SK-N-SH (cell line): ENCODE measurements at regions of chr4 and their contacts with region 1.

Region 1: DNA sequence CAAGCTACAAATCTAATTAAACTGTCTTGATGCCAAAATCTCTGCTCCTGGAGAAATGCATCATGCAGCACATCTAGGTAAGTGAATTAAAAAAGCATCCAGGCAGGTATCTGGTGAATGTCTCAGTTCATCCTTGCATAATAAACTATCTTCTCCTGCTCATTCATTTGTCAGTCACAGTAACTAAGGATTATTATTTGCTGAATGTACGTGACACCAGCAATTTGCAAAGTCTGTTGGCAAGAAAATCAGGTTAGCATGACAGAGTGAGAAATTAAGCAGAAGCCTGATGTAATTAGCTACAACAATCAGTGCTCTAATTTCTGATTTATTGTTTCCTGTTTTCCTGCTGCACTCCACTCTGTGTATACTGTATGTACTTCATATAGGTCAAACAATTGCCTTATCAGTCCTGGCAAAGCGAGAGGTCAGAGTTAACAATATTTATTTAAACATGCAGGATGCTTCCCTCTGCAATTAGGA is 213.6 kb downstream of the FBXO8 start:
- DNase-seq: peak; percentile 69
- H3K4me3 ChIP-seq: no peak overlapping the region
- H3K27ac ChIP-seq: peak overlapping the region in 1 of 2 experiments; percentile 100; a peak in 2 of 4 replicates
- H3K4me1 ChIP-seq: peaks cover 0 to 26% of the 10 kb centered on the region in 2 experiments; a peak in 2 of 4 replicates
- H3K27me3 ChIP-seq: no peaks in the 10 kb centered on the region
- CTCF ChIP-seq: no peak
- EP300 ChIP-seq: peak; percentile 82 to 100
- RAD21 ChIP-seq: peak; percentile 46

Region 2: GRCh38 chr4:173522123-173522950 is 547.6 kb before region 1 on chr4:
- CTCF ChIA-PET with region 1: no interaction called
- POLR2A ChIA-PET with region 1: interaction called, 17 read pairs
- DNase-seq: peak; percentile 73
- H3K4me3 ChIP-seq: peak overlapping the region; percentile 61 to 92
- H3K27ac ChIP-seq: peak overlapping the region; percentile 99
- H3K4me1 ChIP-seq: peaks cover 23 to 30% of the 10 kb centered on the region in 2 experiments
- H3K27me3 ChIP-seq: no peaks in the 10 kb centered on the region
- CTCF ChIP-seq: peak; percentile 22
- EP300 ChIP-seq: peak in 1 of 2 experiments; percentile 82; a peak in 2 of 4 replicates
- RAD21 ChIP-seq: no peak

Region 3: GRCh38 chr4:174005422-174005821 is 64.5 kb before region 1 on chr4:
- CTCF ChIA-PET with region 1: interaction called, 16 read pairs
- POLR2A ChIA-PET with region 1: interaction called, 81 read pairs
- DNase-seq: no peak
- H3K4me3 ChIP-seq: no peak overlapping the region
- H3K27ac ChIP-seq: peak overlapping the region in 1 of 2 experiments; percentile 100; a peak in 2 of 4 replicates
- H3K4me1 ChIP-seq: peaks cover 5 to 27% of the 10 kb centered on the region in 2 experiments; a peak in 3 of 4 replicates
- H3K27me3 ChIP-seq: no peaks in the 10 kb centered on the region
- CTCF ChIP-seq: no peak
- EP300 ChIP-seq: peak in 1 of 2 experiments; percentile 22; a peak in 1 of 4 replicates
- RAD21 ChIP-seq: no peak

Region 4: DNA sequence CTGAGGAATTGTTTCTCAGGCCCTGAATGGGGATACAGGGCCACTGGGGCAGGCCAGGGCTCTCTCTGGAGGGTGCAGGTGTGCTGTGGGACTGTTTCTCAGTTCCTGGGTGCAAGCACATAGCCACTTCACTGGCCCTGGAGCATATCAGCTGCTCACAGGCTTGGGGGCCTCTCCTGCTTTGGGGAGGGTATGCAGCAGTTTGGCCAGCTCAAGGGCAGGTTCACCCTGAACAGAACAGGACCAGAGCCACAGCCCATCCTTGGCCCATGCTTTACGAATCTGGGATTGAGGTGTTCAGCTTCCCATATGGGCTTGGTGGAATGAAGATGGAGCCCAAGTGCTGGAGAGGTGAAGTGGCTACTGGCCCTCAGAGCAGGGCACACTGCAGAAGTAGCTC is 27.1 kb after region 1 on chr4:
- CTCF ChIA-PET with region 1: no interaction called
- POLR2A ChIA-PET with region 1: no interaction called
- DNase-seq: no peak
- H3K4me3 ChIP-seq: no peak overlapping the region
- H3K27ac ChIP-seq: no peak overlapping the region; a peak in 1 of 4 replicates
- H3K4me1 ChIP-seq: peaks cover 0 to 4% of the 10 kb centered on the region in 2 experiments; a peak in 2 of 4 replicates
- H3K27me3 ChIP-seq: no peaks in the 10 kb centered on the region
- CTCF ChIP-seq: no peak
- EP300 ChIP-seq: no peak
- RAD21 ChIP-seq: no peak

Region 5: DNA sequence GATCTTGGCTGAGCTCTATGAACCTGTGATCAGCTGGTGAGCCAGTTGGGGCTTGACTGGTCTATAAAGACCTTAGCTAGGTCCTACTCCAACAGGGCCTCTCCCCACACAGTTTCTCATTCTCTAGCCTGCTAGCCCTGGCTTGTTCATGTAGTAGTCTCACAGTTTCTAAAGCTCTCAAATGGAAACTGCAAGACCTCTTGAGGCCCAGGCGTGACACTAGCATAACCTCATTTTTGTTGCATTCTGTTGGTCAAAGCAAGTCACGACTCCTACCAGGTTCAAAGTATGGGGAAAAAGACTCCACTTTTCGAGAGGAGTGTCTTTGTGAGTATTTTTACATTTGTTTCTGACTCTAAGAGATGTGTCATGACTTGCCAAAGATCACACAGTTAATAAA is 264.7 kb after region 1 on chr4:
- CTCF ChIA-PET with region 1: no interaction called
- POLR2A ChIA-PET with region 1: no interaction called
- DNase-seq: no peak
- H3K4me3 ChIP-seq: no peak overlapping the region
- H3K27ac ChIP-seq: no peak overlapping the region
- H3K4me1 ChIP-seq: no peaks in the 10 kb centered on the region; a peak in 1 of 4 replicates
- H3K27me3 ChIP-seq: no peaks in the 10 kb centered on the region
- CTCF ChIP-seq: no peak
- EP300 ChIP-seq: no peak
- RAD21 ChIP-seq: no peak